ENCODE measurements at regions of chr3 and their contacts with region 1.

Region 1: GRCh38 chr3:44099566-44100297 is 142.0 kb upstream of the TOPAZ1 start:
- DNase-seq: no peak
- ATAC-seq: no peak
- H3K4me3 ChIP-seq: no peak overlapping the region
- H3K27ac ChIP-seq: no peak overlapping the region
- H3K4me1 ChIP-seq: no peaks in the 10 kb centered on the region
- H3K27me3 ChIP-seq: peaks cover 3% of the 10 kb centered on the region
- CTCF ChIP-seq: no peak
- POLR2A ChIP-seq: no peak
- RAD21 ChIP-seq: no peak

Region 2: DNA sequence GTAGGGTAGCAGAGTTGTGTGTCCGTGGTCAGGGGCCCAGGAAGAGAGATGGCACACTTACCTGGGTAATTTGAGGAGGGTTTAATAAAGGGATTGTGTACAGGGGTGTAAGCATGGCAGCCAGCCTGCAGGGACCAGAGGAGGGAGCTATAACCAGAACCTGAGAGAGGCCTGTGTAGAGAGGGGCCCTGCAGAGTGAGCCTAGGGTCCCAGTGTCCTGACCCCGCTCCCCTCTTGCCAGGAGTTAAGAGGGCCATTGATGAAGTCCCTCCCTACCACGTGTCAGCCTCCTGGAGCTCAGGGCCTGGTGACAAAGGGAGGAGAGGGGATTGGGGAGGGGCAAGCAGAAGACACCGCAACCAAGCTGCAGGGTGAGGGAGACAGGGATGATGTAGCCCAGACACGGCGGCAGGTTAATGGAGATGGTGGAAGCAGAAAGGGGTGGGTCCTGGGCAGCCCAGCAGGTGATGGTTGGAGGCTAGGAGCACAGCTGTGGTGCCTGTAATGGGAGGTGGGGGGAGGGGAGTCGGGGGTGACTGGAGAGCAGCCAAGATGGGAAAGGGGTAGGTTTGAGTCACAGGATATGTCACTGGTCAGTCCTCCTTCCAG is 23.4 kb before region 1 on chr3:
- CTCF ChIA-PET with region 1: no interaction called
- POLR2A ChIA-PET with region 1: interaction called, 15 read pairs
- dilution Hi-C with region 1: no loop called
- in situ Hi-C with region 1: no loop called
- intact Hi-C with region 1: no loop called
- DNase-seq: no peak
- ATAC-seq: no peak
- H3K4me3 ChIP-seq: no peak overlapping the region
- H3K27ac ChIP-seq: no peak overlapping the region
- H3K4me1 ChIP-seq: no peaks in the 10 kb centered on the region
- H3K27me3 ChIP-seq: peaks cover 15% of the 10 kb centered on the region
- CTCF ChIP-seq: no peak
- POLR2A ChIP-seq: no peak
- RAD21 ChIP-seq: no peak

Region 3: DNA sequence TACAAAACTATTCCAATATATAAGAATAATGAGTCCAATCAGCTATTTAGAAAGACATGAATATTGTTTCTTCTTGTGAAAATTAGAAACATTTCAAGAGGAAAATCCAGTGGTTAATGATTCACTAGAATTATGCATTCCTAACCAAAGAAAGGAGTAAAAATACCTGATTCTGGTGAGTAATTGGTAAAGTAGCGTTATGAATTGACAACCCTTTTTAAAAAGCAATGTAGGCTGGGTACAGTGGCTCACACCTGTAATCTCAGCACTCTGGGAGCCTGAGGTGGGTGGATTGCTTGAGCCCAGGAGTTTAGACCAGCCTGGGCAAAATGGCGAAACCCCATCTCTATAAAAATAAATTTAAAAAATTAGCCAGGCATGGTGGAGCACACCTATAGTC is 185.2 kb after region 1 on chr3:
- CTCF ChIA-PET with region 1: no interaction called
- POLR2A ChIA-PET with region 1: no interaction called
- dilution Hi-C with region 1: no loop called
- in situ Hi-C with region 1: no loop called
- intact Hi-C with region 1: no loop called
- DNase-seq: no peak
- ATAC-seq: no peak
- H3K4me3 ChIP-seq: no peak overlapping the region
- H3K27ac ChIP-seq: no peak overlapping the region
- H3K4me1 ChIP-seq: no peaks in the 10 kb centered on the region
- H3K27me3 ChIP-seq: no peaks in the 10 kb centered on the region
- CTCF ChIP-seq: no peak
- POLR2A ChIP-seq: no peak
- RAD21 ChIP-seq: no peak

Region 4: DNA sequence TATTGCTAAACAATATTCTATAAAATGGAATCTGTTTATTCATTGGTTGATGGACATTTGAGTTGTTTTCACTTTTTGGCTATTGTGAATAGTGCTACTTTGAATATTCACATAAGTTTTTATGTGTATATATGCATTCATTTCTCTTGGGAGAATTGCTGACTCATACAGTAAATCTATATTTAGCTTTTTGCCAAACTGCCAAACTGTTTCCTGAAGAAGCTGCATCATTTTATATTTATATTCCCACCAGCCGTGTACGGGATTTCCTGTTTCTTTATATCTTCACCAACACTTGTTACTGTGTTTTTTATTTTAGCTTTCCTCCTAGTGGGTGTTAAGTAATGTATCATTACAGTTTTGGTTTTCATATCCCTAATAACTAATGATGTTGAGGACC is 226.3 kb after region 1 on chr3:
- CTCF ChIA-PET with region 1: no interaction called
- POLR2A ChIA-PET with region 1: no interaction called
- dilution Hi-C with region 1: no loop called
- in situ Hi-C with region 1: no loop called
- intact Hi-C with region 1: no loop called
- DNase-seq: peak; percentile 55
- ATAC-seq: no peak
- H3K4me3 ChIP-seq: no peak overlapping the region
- H3K27ac ChIP-seq: no peak overlapping the region
- H3K4me1 ChIP-seq: no peaks in the 10 kb centered on the region
- H3K27me3 ChIP-seq: peaks cover 2% of the 10 kb centered on the region
- CTCF ChIP-seq: no peak
- POLR2A ChIP-seq: no peak
- RAD21 ChIP-seq: no peak